Calu3 (cell line): ENCODE measurements at regions of chr17 and their contacts with region 1.

Region 1: GRCh38 chr17:27332485-27333409 is 38.8 kb downstream of the WSB1 start:
- DNase-seq: peak; percentile 99
- H3K4me3 Mint-ChIP-seq: peak overlapping the region; percentile 59
- H3K27ac Mint-ChIP-seq: peak overlapping the region; percentile 86
- H3K4me1 Mint-ChIP-seq: peaks cover 34% of the 10 kb centered on the region
- H3K27me3 Mint-ChIP-seq: no peaks in the 10 kb centered on the region
- CTCF ChIP-seq: peak; percentile 87

Region 2: DNA sequence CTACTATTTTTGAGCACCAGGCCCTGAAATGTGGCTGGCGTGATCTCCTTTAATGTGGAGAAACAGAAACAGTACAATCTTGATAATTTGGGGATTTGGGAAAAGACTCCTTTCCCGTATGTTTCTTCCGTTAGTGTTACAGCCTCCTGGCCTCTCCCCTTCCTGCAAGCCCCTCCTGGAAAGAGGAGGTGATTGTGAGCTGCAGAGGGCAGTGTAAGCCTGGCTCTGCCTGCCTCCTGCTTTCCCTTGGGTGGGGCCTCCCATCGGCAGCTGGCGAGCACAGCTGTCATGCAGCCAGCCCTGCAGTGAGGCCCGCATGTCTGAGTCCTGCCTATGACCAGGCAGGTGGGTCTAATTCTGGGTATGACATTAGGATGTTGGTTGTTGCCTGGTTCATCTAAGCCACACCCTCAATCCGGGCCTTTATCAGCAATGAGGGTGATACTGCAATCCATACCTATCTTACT is 87.5 kb before region 1 on chr17:
- CTCF ChIA-PET with region 1: interaction called, 19 read pairs
- intact Hi-C with region 1: loop called (anchors 2 kb)
- DNase-seq: peak; percentile 81
- H3K4me3 Mint-ChIP-seq: peak overlapping the region; percentile 45
- H3K27ac Mint-ChIP-seq: peak overlapping the region; percentile 87
- H3K4me1 Mint-ChIP-seq: peaks cover 68% of the 10 kb centered on the region
- H3K27me3 Mint-ChIP-seq: peaks cover 5% of the 10 kb centered on the region
- CTCF ChIP-seq: peak; percentile 57